Motor neuron (in vitro differentiated cells): ENCODE measurements at regions of chr15 and their contacts with region 1.

Region 1: GRCh38 chr15:70799667-70800450 is 36.5 kb upstream of the UACA start:
- ATAC-seq: peak in 2 of 8 experiments; percentile 14 to 55
- H3K4me3 ChIP-seq: no peak overlapping the region
- H3K27ac ChIP-seq: no peak overlapping the region
- H3K4me1 ChIP-seq: no peaks in the 10 kb centered on the region

Region 2: GRCh38 chr15:69554256-69554961 is 1245.5 kb before region 1 on chr15:
- in situ Hi-C with region 1: no loop called
- ATAC-seq: peak in 3 of 8 experiments; percentile 20 to 82 (median 34)
- H3K4me3 ChIP-seq: no peak overlapping the region
- H3K27ac ChIP-seq: no peak overlapping the region
- H3K4me1 ChIP-seq: peaks cover 22 to 24% of the 10 kb centered on the region in 2 donors

Region 3: GRCh38 chr15:70679919-70680231 is 120.0 kb before region 1 on chr15:
- in situ Hi-C with region 1: loop called in 1 of 9 experiments (anchors 10 kb)
- ATAC-seq: no peak
- H3K4me3 ChIP-seq: no peak overlapping the region
- H3K27ac ChIP-seq: no peak overlapping the region
- H3K4me1 ChIP-seq: no peaks in the 10 kb centered on the region